AG04449 (cell line): ENCODE measurements at regions of chr1 and their contacts with region 1.

Region 1: GRCh38 chr1:110412576-110412975 is 5.1 kb upstream of the LAMTOR5 start:
- DNase-seq: no peak
- H3K4me3 ChIP-seq: no peak overlapping the region
- CTCF ChIP-seq: peak; percentile 83

Region 2: DNA sequence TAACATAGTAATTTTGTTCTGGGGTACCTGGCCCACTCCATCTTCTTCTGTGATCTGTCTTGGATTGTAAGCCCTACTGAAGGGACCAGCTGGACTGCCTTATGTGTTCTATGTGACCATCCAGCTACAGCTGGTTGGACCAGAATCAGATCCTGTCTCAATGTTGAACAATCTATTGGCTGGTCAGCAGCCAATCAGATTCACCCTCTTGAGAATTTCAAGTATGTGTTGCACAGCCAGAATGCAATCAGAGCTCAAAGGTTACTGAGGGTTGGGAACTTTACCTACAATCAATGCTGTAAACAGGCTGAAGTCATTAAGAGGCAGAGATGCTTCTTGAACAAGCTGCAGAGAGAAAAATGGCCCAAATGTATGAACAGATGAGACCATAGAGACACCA is 140.5 kb before region 1 on chr1:
- CTCF ChIA-PET with region 1: no interaction called
- POLR2A ChIA-PET with region 1: no interaction called
- DNase-seq: no peak
- H3K4me3 ChIP-seq: no peak overlapping the region
- CTCF ChIP-seq: no peak

Region 3: GRCh38 chr1:110319332-110320152 is 93.0 kb before region 1 on chr1:
- CTCF ChIA-PET with region 1: interaction called, 10 read pairs
- POLR2A ChIA-PET with region 1: no interaction called
- DNase-seq: no peak
- H3K4me3 ChIP-seq: no peak overlapping the region
- CTCF ChIP-seq: no peak

Region 4: DNA sequence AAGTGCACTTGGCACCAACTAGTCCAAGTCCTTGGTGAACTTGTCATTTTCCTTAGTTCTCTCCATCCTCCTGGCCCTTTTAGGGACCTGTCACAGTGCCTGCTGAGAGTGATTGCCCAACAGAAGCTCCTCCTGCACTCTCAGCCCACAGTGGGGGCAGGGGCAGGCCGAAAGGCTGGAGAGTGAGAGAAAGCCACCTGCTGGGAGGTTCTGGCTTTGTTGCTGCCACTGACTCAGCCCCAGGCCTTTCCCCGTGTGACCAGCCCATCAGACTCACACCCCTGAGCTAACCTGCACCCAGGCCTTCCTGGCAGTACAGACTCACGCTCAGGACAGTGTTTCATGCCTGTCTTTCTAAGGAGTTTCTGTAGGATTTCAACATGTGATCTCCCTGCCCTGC is 21.2 kb after region 1 on chr1:
- CTCF ChIA-PET with region 1: interaction called, 106 read pairs
- POLR2A ChIA-PET with region 1: no interaction called
- DNase-seq: no peak
- H3K4me3 ChIP-seq: no peak overlapping the region
- CTCF ChIP-seq: no peak

Region 5: DNA sequence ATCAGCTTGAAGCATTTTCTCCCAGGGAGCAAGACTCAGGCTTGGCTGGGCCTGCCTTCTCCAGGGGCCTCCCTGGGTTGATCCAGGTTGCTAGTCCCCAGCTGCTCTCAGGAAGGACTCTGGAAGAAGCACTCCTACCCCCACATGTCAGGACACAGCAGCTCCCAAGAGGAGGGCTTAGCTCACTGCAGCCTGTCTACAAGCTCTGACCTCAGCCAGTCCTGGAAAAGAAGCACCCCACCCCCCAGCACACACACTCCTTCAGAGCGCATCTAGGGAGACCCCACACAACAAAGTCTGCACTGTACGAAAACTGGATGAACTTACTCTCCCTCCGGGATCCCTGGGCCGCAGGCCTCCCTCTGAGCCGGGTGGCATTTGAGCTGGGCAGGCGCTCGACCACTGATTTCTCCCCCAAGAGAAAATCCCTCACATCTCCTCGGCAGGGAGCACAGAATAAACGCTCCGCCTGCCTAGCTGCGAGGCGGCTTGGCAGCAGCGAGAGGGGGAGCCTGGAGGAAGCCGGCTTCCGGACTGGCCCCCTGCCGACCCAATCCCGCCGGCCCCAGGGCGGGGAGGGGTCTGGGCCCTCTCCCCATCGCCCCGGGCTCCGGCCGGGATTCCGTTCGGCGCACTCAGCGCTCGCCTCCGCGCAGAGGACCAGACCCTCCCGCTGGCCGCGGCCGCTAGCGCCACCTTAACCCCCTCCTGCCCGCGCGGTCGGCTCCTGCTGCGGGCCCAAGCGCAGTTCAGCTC is 193.5 kb after region 1 on chr1 and contains the start of gene KCNA2:
- CTCF ChIA-PET with region 1: no interaction called
- POLR2A ChIA-PET with region 1: no interaction called
- DNase-seq: no peak
- H3K4me3 ChIP-seq: peak within 1 kb of the TSS; percentile 23
- CTCF ChIP-seq: no peak

Region 6: GRCh38 chr1:110630839-110631663 is 218.5 kb after region 1 on chr1:
- CTCF ChIA-PET with region 1: no interaction called
- POLR2A ChIA-PET with region 1: no interaction called
- DNase-seq: no peak
- H3K4me3 ChIP-seq: no peak overlapping the region
- CTCF ChIP-seq: peak; percentile 83